ENCODE measurements at regions of chr1 and their contacts with region 1.

Region 1: DNA sequence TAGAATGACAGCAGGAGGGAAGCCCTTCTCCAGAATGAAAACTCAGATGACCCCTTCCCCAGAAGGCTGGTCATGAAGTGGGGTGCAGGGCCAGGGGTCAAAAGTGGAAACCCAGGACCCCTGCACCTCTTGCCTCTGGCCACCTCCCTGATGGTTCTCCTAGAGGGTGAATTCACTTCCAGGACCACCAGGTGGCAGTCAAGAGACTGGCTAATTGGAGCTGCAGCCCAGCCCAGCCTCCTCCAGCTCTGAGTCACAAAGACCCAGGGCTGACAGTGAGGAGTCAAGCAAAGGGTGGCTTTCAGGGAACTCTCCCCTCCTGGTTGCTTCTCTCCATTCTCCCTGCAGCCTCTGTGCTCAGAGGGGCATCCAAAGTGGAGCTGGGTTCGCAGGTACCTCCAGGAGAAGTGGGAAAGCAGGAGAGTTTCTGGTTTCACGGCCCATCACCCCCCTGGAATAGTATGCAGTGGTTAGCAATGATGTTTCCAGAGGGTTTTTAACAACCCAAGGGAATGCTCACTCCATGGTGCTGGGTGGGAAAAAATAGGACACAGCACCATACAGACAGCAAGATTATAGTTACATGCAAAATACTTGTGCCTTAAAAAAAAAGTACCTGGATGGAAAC is 6.1 kb upstream of the EPHB2 start:
- DNase-seq: peak; percentile 88 to 91
- H3K4me3 ChIP-seq: no peak overlapping the region
- H3K27ac ChIP-seq: no peak overlapping the region
- H3K4me1 ChIP-seq: no peaks in the 10 kb centered on the region
- H3K27me3 ChIP-seq: no peaks in the 10 kb centered on the region
- CTCF ChIP-seq: peak; percentile 80 to 92 (median 90)
- POLR2A ChIP-seq: no peak

Region 2: DNA sequence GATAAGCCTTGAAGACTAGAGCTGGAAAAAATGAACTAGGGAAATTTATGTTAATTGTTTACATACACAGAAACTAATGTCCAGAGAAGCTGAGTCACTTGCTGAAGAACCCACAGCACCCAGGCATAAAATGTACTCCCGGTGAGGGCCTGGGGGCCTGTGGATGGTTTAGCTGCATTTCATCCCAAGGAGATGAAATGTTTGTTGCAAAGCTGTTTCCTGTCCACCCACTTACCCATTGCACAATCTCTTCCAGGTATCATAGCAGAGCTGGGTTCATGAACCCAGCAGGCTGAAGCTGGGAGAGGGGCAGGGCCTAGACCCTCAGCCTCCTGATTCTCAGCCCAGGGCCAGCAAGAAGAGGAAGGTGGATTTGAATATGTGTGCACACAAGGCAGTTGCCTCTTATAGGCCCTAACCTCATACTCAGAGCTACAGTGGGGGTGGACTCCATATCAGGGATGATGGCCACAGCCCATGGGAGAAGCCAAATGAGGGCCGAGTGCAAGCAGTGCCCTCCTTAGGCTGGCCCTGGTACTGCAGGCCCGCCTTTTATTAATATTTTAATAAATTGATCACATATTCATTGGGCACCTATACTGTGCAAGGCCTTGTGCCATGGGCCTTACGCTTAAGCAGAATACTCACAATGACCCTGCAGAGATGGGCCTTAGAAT is 157.3 kb after region 1 on chr1:
- intact Hi-C with region 1: loop called (anchors 5 kb)
- DNase-seq: peak; percentile 44 to 47
- H3K4me3 ChIP-seq: no peak overlapping the region
- H3K27ac ChIP-seq: no peak overlapping the region
- H3K4me1 ChIP-seq: peaks cover 0 to 5% of the 10 kb centered on the region in 2 donors
- H3K27me3 ChIP-seq: no peaks in the 10 kb centered on the region
- CTCF ChIP-seq: peak; percentile 62 to 89 (median 75)
- POLR2A ChIP-seq: no peak

Region 3: GRCh38 chr1:22886211-22886610 is 181.7 kb after region 1 on chr1:
- intact Hi-C with region 1: loop called (anchors 2 kb)
- DNase-seq: no peak
- H3K4me3 ChIP-seq: no peak overlapping the region
- H3K27ac ChIP-seq: no peak overlapping the region
- H3K4me1 ChIP-seq: no peaks in the 10 kb centered on the region
- H3K27me3 ChIP-seq: no peaks in the 10 kb centered on the region
- CTCF ChIP-seq: no peak
- POLR2A ChIP-seq: no peak